ENCODE measurements at regions of chr11 and their contacts with region 1.

Region 1: DNA sequence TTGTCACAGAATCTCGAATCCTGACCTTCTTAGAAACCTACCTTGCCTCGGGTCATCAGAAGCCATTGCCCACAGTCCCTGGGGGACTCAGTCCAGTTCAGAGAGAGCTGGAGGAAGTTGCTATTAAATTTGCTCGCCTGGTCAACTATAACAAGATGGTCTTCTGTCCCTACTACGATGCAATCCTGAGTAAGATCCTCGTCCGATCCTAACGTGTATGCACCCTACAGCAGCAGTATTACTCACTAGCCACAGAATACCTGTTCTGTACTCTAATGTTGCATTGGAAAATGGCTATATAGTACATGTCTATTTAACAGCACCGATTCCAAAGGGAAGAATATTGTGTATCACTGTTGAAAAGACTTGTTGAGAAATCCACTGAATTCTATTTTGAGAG is 33.1 kb downstream of the TCP11L1 start:
- DNase-seq: no peak
- H3K4me3 ChIP-seq: no peak overlapping the region
- H3K27ac ChIP-seq: no peak overlapping the region
- H3K4me1 ChIP-seq: no peaks in the 10 kb centered on the region
- H3K27me3 ChIP-seq: no peaks in the 10 kb centered on the region
- CTCF ChIP-seq: no peak

Region 2: DNA sequence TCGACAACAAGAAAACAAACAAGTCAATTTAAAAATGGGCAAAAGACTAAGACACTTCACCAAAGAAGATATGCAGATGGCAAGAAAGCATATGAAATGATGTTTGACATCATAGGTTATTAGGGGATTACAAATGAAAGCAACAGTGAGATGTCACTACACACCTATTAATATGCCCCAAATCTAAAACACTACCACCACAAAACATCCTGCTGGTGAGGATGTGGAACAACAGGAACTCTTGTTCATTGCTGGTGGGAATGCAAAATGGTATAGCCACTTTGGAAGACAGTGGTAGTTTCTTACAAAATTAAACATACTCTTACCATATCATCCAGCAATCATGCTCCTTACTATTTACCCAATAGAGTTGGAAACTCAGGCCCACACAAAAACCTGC is 213.7 kb before region 1 on chr11:
- CTCF ChIA-PET with region 1: no interaction called
- dilution Hi-C with region 1: no loop called
- in situ Hi-C with region 1: no loop called
- intact Hi-C with region 1: no loop called
- DNase-seq: no peak
- H3K4me3 ChIP-seq: no peak overlapping the region
- H3K27ac ChIP-seq: no peak overlapping the region
- H3K4me1 ChIP-seq: no peaks in the 10 kb centered on the region
- H3K27me3 ChIP-seq: no peaks in the 10 kb centered on the region
- CTCF ChIP-seq: peak in 1 of 2 donors; percentile 16

Region 3: DNA sequence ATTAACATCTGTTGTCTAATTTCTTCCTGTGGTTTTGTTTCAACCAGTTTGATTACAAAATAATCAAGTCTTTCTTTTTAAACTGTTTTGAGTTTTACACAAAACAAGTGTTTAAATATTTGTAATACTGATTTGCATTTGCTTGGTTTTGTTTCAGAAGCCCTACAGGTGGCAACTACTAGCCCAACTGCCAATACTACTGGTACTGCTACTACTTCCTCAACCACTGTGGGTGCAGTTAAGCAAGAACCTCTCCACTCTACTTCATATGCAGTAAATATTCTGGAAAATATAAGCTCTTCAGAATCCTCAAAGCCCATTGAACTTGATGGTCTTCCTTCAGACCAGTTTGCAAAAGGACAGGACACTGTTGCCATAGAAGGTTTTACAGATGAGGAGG is 118.8 kb before region 1 on chr11:
- CTCF ChIA-PET with region 1: no interaction called
- dilution Hi-C with region 1: no loop called
- in situ Hi-C with region 1: loop called in 1 of 2 experiments (anchors 10 kb)
- intact Hi-C with region 1: no loop called
- DNase-seq: no peak
- H3K4me3 ChIP-seq: no peak overlapping the region
- H3K27ac ChIP-seq: no peak overlapping the region
- H3K4me1 ChIP-seq: no peaks in the 10 kb centered on the region
- H3K27me3 ChIP-seq: no peaks in the 10 kb centered on the region
- CTCF ChIP-seq: no peak

Region 4: GRCh38 chr11:33412241-33412640 is 339.8 kb after region 1 on chr11:
- CTCF ChIA-PET with region 1: no interaction called
- dilution Hi-C with region 1: no loop called
- in situ Hi-C with region 1: no loop called
- intact Hi-C with region 1: no loop called
- DNase-seq: no peak
- H3K4me3 ChIP-seq: no peak overlapping the region
- H3K27ac ChIP-seq: no peak overlapping the region
- H3K4me1 ChIP-seq: no peaks in the 10 kb centered on the region
- H3K27me3 ChIP-seq: no peaks in the 10 kb centered on the region
- CTCF ChIP-seq: no peak